Activated CD4-positive, alpha-beta memory T cell treated with anti-CD3 and anti-CD28 coated beads, Interleukin-2, amount 10 ng/mL, durations not matched to agents 7 days and 5 days (primary cell): ENCODE measurements at regions of chr3 and their contacts with region 1.

Region 1: GRCh38 chr3:186540221-186540834 is 3.9 kb downstream of the CRYGS start:
- DNase-seq: peak; percentile 85
- H3K4me3 Mint-ChIP-seq: no peak overlapping the region
- H3K27ac Mint-ChIP-seq: peak overlapping the region; percentile 2
- H3K4me1 Mint-ChIP-seq: peaks cover 21% of the 10 kb centered on the region
- H3K27me3 Mint-ChIP-seq: no peaks in the 10 kb centered on the region

Region 2: GRCh38 chr3:185976977-185977678 is 563.2 kb before region 1 on chr3:
- CTCF ChIA-PET with region 1: interaction called, 48 read pairs
- POLR2A ChIA-PET with region 1: no interaction called
- DNase-seq: peak; percentile 84
- H3K4me3 Mint-ChIP-seq: no peak overlapping the region
- H3K27ac Mint-ChIP-seq: no peak overlapping the region
- H3K4me1 Mint-ChIP-seq: peaks cover 11% of the 10 kb centered on the region
- H3K27me3 Mint-ChIP-seq: peaks cover 15% of the 10 kb centered on the region

Region 3: GRCh38 chr3:186241910-186242821 is 298.2 kb before region 1 on chr3:
- CTCF ChIA-PET with region 1: interaction called, 17 read pairs
- POLR2A ChIA-PET with region 1: no interaction called
- DNase-seq: peak; percentile 66
- H3K4me3 Mint-ChIP-seq: peak overlapping the region; percentile 27
- H3K27ac Mint-ChIP-seq: no peak overlapping the region
- H3K4me1 Mint-ChIP-seq: peaks cover 10% of the 10 kb centered on the region
- H3K27me3 Mint-ChIP-seq: peaks cover 8% of the 10 kb centered on the region

Region 4: GRCh38 chr3:186520957-186521842 is 19.1 kb before region 1 on chr3:
- CTCF ChIA-PET with region 1: interaction called, 38 read pairs
- POLR2A ChIA-PET with region 1: interaction called, 12 read pairs
- DNase-seq: peak; percentile 34
- H3K4me3 Mint-ChIP-seq: no peak overlapping the region
- H3K27ac Mint-ChIP-seq: no peak overlapping the region
- H3K4me1 Mint-ChIP-seq: peaks cover 41% of the 10 kb centered on the region
- H3K27me3 Mint-ChIP-seq: no peaks in the 10 kb centered on the region

Region 5: DNA sequence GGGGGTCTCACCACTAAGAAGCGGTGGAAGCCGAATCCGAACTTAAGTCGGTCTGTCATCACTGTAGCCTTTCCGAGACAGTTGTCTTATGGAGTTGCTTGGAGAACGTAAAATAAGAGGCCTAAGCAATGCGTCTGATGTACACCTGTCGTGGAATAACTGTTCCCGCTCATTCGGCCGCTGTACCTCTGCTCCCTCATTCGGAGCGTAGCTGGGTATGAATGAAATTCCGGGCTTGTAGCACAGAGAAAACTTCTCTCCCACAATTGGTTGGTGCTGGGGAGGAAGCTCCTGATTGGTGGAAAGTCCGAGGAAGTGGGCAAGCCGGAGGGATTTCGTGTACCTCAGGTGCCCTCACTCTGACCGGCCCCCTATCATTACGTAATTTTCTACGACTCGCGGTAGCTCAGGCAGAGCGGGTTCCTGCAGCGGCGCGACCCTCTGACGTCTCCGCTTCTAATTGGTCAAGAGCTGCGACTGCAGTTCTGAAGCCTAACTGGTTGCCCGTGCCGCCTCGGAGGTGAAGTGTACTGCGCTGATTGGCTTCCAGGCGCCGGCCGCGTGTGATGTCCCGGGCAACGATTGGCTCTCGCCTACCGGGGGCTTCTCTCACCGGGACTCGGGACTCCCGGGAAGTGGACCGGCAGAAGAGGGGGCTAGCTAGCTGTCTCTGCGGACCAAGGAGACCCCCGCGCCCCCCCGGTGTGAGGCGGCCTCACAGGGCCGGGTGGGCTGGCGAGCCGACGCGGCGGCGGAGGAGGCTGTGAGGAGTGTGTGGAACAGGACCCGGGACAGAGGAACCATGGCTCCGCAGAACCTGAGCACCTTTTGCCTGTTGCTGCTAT is 30.0 kb after region 1 on chr3 and contains the start of gene DNAJB11:
- CTCF ChIA-PET with region 1: interaction called, 11 read pairs
- POLR2A ChIA-PET with region 1: interaction called, 9 read pairs
- DNase-seq: peak; percentile 99
- H3K4me3 Mint-ChIP-seq: peak within 1 kb of the TSS; percentile 96
- H3K27ac Mint-ChIP-seq: peak within 1 kb of the TSS; percentile 92
- H3K4me1 Mint-ChIP-seq: peaks cover 62% of the 10 kb centered on the region
- H3K27me3 Mint-ChIP-seq: no peaks in the 10 kb centered on the region
- total RNA-seq, gene DNAJB11: 50.7 to 55.7 TPM